ENCODE measurements at regions of chr15 and their contacts with region 1.

Region 1: DNA sequence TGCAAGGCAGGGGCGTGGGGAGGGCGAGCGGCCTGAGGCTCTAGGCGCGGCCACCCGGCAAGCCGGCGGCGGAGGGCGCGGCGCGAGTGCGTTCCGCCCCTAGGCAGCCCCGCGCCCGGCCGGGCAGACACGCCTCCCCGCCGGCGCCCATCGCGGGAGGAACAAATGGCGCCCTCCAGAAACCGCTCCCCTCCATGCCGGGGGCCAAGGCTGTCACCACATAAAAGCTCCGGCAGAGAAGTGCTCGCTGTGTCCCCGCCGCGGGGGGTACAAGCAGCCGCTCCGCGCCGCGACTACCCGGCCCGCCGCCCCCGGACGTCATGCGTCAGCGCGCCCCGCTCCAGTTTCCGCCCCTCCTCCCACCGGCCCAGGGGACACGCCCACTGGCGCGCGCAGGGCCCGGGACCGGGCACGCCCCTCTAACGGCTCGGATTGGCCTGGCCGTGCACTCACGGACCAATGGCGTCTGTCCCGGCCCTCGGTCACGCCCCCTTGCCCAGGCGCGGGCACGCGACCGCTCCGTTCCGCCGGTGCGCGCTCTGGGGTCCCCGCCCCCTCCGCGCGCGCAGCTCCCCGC is 391 bp upstream of the KLF13 start:
- DNase-seq: peak; percentile 98 to 100
- H3K4me3 ChIP-seq: peak overlapping the region; percentile 68
- CTCF ChIP-seq: no peak
- POLR2A ChIP-seq: peak in 1 of 2 donors; percentile 88

Region 2: GRCh38 chr15:31215490-31216214 is 110.6 kb before region 1 on chr15:
- intact Hi-C with region 1: loop called (anchors 5 kb)
- DNase-seq: peak; percentile 76 to 96
- H3K4me3 ChIP-seq: peak overlapping the region; percentile 22
- CTCF ChIP-seq: peak in 1 of 3 donors; percentile 67
- POLR2A ChIP-seq: no peak

Region 3: DNA sequence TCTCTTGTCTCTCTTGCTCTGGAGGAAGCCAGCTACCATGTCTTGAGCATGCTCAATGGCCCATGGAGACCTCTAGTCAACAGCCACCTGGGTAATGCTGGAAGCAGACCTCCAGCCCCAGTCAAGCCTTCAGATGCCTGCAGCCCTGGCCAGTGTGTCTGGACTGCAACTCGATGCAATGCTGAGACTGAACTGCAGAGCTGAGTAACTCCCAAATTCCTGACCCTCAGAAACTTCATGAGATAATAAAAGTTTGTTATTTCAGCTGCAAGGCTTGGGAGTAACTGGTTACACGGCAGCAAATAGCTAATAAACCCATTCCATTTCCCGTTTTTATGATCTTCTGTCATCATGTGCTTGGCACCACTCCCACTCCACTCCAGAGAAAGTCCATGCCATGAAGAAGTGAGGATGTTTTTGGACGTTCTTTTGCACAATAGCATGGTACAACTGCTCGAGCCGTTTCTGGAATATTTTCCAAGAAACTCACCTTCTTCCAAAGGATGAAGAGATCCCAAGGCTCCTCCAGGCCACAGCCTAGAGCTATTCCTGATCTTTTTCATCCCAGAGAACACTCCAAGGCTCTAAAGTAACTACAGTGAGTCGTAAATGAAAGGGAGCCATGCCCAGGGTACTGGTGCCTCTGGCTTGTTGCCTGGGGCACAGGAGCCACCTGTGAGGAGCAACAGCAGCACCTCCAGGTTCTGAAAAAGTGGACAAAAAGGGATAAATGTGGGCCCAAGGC is 71.6 kb before region 1 on chr15:
- intact Hi-C with region 1: no loop called
- DNase-seq: peak in 1 of 2 donors; percentile 49
- H3K4me3 ChIP-seq: no peak overlapping the region
- CTCF ChIP-seq: no peak
- POLR2A ChIP-seq: no peak

Region 4: DNA sequence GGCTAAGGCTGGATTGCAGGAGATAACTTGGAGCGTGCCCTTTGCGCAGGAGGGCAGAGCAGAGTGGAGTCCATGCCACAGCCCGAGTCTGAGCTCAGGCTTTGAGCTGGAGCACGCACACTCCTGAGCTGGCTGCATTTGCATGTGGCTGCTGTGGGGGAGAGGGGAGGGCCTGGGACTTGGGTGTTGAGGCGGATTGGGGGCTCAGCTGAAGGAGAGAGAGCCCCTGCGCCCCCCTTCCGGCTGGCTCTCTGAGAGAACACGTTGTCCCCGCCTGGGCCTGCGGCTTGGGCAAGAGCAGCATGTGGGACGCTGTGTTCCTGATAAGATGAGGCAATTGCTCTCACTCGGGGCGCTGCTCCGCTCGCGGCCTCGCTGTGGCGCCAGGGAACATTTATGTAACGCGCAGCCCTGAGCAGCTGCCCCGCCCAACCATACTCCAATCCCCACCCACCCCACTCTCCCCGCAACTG is 39.4 kb after region 1 on chr15:
- intact Hi-C with region 1: loop called (anchors 5 kb)
- DNase-seq: peak; percentile 96 to 99
- H3K4me3 ChIP-seq: no peak overlapping the region
- CTCF ChIP-seq: no peak
- POLR2A ChIP-seq: no peak

Region 5: GRCh38 chr15:31458591-31459399 is 132.6 kb after region 1 on chr15:
- intact Hi-C with region 1: no loop called
- DNase-seq: peak; percentile 47 to 66
- H3K4me3 ChIP-seq: no peak overlapping the region
- CTCF ChIP-seq: no peak
- POLR2A ChIP-seq: no peak